A549 (cell line): ENCODE measurements at regions of chr10 and their contacts with region 1.

Region 1: GRCh38 chr10:5460468-5461202 is 38.7 kb downstream of the CALML5 start:
- DNase-seq: no peak
- ATAC-seq: no peak
- H3K4me3 ChIP-seq: no peak overlapping the region
- H3K27ac ChIP-seq: no peak overlapping the region
- H3K4me1 ChIP-seq: no peaks in the 10 kb centered on the region
- CTCF ChIP-seq: no peak
- EP300 ChIP-seq: no peak
- POLR2A ChIP-seq: no peak
- RAD21 ChIP-seq: no peak

Region 2: GRCh38 chr10:5343562-5343961 is 117.1 kb before region 1 on chr10:
- CTCF ChIA-PET with region 1: no interaction called
- POLR2A ChIA-PET with region 1: no interaction called
- DNase-seq: peak in 1 of 2 experiments; percentile 45
- ATAC-seq: peak; percentile 50 to 72; a peak in 3 of 6 replicates
- H3K4me3 ChIP-seq: no peak overlapping the region
- H3K27ac ChIP-seq: no peak overlapping the region
- H3K4me1 ChIP-seq: no peaks in the 10 kb centered on the region
- CTCF ChIP-seq: no peak
- EP300 ChIP-seq: no peak
- POLR2A ChIP-seq: no peak
- RAD21 ChIP-seq: peak; percentile 15 to 46; a peak in 2 of 5 replicates

Region 3: GRCh38 chr10:5476918-5477525 is 16.4 kb after region 1 on chr10:
- CTCF ChIA-PET with region 1: no interaction called
- POLR2A ChIA-PET with region 1: no interaction called
- DNase-seq: no peak
- ATAC-seq: no peak
- H3K4me3 ChIP-seq: no peak overlapping the region
- H3K27ac ChIP-seq: no peak overlapping the region
- H3K4me1 ChIP-seq: peaks cover 3% of the 10 kb centered on the region; the same call in 1 of the 3 replicates
- CTCF ChIP-seq: no peak
- EP300 ChIP-seq: no peak
- POLR2A ChIP-seq: no peak
- RAD21 ChIP-seq: no peak

Region 4: GRCh38 chr10:5654218-5654755 is 193.7 kb after region 1 on chr10:
- CTCF ChIA-PET with region 1: no interaction called
- POLR2A ChIA-PET with region 1: interaction called, 12 read pairs
- DNase-seq: no peak
- ATAC-seq: no peak
- H3K4me3 ChIP-seq: no peak overlapping the region
- H3K27ac ChIP-seq: no peak overlapping the region
- H3K4me1 ChIP-seq: peaks cover under 1% of the 10 kb centered on the region; the same call in 2 of the 3 replicates
- CTCF ChIP-seq: no peak
- EP300 ChIP-seq: no peak
- POLR2A ChIP-seq: no peak
- RAD21 ChIP-seq: no peak